GM12878 (cell line): ENCODE measurements at regions of chr3 and their contacts with region 1.

Region 1: GRCh38 chr3:136752422-136753325 is 496 bp upstream of the STAG1 start:
- DNase-seq: peak; percentile 94
- ATAC-seq: peak; percentile 90
- H3K4me3 ChIP-seq: peak overlapping the region; percentile 63
- H3K27ac ChIP-seq: peak overlapping the region; percentile 91
- H3K4me1 ChIP-seq: peaks cover 16% of the 10 kb centered on the region
- H3K27me3 ChIP-seq: no peaks in the 10 kb centered on the region
- CTCF ChIP-seq: peak in 2 of 3 experiments; percentile 71 to 97; a peak in 4 of 6 replicates
- EP300 ChIP-seq: no peak
- POLR2A ChIP-seq: peak; percentile 89
- RAD21 ChIP-seq: peak; percentile 67

Region 2: DNA sequence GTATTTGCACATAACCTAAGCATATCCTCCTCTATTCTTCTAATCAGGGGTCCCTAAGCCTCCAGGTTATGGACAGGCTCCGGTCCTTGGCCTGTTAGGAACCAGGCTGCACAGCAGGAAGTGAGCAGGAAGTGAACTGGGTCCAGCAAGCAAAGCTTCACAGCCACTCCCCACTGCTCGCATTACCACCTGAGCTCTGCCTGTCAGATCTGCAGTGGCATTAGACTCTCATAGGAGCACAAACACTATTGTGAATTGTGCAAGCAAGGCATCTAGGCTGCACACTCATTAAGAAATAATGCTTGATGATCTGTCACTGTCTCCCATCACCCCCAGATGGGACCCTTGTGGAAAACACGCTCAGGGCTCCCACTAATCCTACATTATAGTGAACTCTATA is 566.3 kb before region 1 on chr3:
- CTCF ChIA-PET with region 1: interaction called, 4 read pairs
- POLR2A ChIA-PET with region 1: no interaction called
- RAD21 ChIA-PET with region 1: interaction called, 4 read pairs
- SMC1A ChIA-PET with region 1: no interaction called
- in situ Hi-C with region 1: loop called (anchors 5 kb)
- intact Hi-C with region 1: no loop called
- DNase-seq: no peak
- ATAC-seq: peak; percentile 64
- H3K4me3 ChIP-seq: no peak overlapping the region; the same call in 1 of the 2 replicates
- H3K27ac ChIP-seq: no peak overlapping the region
- H3K4me1 ChIP-seq: peaks cover 10% of the 10 kb centered on the region; the same call in 1 of the 2 replicates
- H3K27me3 ChIP-seq: no peaks in the 10 kb centered on the region
- CTCF ChIP-seq: no peak
- EP300 ChIP-seq: no peak
- POLR2A ChIP-seq: no peak
- RAD21 ChIP-seq: no peak

Region 3: GRCh38 chr3:136350132-136350531 is 402.5 kb before region 1 on chr3:
- CTCF ChIA-PET with region 1: interaction called, 14 read pairs
- POLR2A ChIA-PET with region 1: interaction called, 5 read pairs
- RAD21 ChIA-PET with region 1: interaction called, 5 read pairs
- SMC1A ChIA-PET with region 1: interaction called, 8 read pairs
- in situ Hi-C with region 1: no loop called
- intact Hi-C with region 1: no loop called
- DNase-seq: no peak
- ATAC-seq: no peak
- H3K4me3 ChIP-seq: no peak overlapping the region
- H3K27ac ChIP-seq: no peak overlapping the region
- H3K4me1 ChIP-seq: peaks cover 6% of the 10 kb centered on the region; the same call in 1 of the 2 replicates
- H3K27me3 ChIP-seq: no peaks in the 10 kb centered on the region
- CTCF ChIP-seq: no peak
- EP300 ChIP-seq: no peak
- POLR2A ChIP-seq: no peak
- RAD21 ChIP-seq: no peak

Region 4: GRCh38 chr3:136545664-136546268 is 206.9 kb before region 1 on chr3:
- CTCF ChIA-PET with region 1: interaction called, 47 read pairs
- POLR2A ChIA-PET with region 1: no interaction called
- RAD21 ChIA-PET with region 1: interaction called, 43 read pairs
- SMC1A ChIA-PET with region 1: interaction called, 9 read pairs
- in situ Hi-C with region 1: no loop called
- intact Hi-C with region 1: loop called (anchors 2 kb)
- DNase-seq: no peak
- ATAC-seq: no peak
- H3K4me3 ChIP-seq: no peak overlapping the region
- H3K27ac ChIP-seq: no peak overlapping the region
- H3K4me1 ChIP-seq: no peaks in the 10 kb centered on the region
- H3K27me3 ChIP-seq: no peaks in the 10 kb centered on the region
- CTCF ChIP-seq: peak in 2 of 3 experiments; percentile 11 to 37; a peak in 2 of 6 replicates
- EP300 ChIP-seq: no peak
- POLR2A ChIP-seq: no peak
- RAD21 ChIP-seq: peak; percentile 51

Region 5: DNA sequence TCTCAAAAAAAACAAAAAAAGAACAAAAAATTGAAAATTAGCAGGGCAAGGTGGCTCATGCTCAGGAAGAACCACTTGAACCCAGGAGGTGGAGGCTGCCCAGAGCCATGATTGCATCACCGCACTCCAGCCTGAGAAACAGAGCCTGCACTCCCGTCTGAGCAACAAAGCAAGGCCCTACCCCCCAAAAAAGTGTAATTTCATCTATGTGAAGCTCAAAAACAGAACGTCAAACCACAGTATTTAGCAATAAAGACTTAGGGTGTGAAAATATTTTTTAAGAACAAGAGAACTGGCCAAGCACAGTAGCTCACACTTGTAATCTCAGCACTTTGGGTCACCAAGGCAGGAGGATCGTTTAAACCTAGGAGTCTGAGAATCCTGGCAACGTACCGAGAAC is 38.7 kb before region 1 on chr3:
- CTCF ChIA-PET with region 1: no interaction called
- POLR2A ChIA-PET with region 1: no interaction called
- RAD21 ChIA-PET with region 1: no interaction called
- SMC1A ChIA-PET with region 1: no interaction called
- in situ Hi-C with region 1: no loop called
- intact Hi-C with region 1: no loop called
- DNase-seq: no peak
- ATAC-seq: no peak
- H3K4me3 ChIP-seq: no peak overlapping the region
- H3K27ac ChIP-seq: no peak overlapping the region
- H3K4me1 ChIP-seq: no peaks in the 10 kb centered on the region
- H3K27me3 ChIP-seq: no peaks in the 10 kb centered on the region
- CTCF ChIP-seq: no peak
- EP300 ChIP-seq: no peak
- POLR2A ChIP-seq: no peak
- RAD21 ChIP-seq: no peak

Region 6: DNA sequence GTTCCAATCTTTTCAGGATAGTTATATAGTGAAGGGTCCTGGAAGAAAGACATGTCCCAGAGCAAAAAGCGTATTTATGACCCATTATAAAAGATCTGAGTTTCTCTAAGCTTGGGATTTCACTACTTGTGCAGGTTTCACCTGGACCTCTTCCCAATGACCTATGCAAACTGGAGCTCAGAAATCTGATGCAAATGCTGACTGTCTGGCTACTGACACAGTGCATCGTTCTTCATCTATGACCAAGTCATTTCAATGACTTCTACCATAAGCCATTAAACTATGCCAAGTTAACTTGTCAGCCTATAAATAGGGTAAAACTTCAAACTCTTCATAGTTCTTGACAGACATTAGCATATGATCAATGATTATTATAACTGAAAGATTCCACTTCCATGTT is 11.6 kb before region 1 on chr3:
- CTCF ChIA-PET with region 1: interaction called, 17 read pairs
- POLR2A ChIA-PET with region 1: interaction called, 5 read pairs
- RAD21 ChIA-PET with region 1: interaction called, 10 read pairs
- SMC1A ChIA-PET with region 1: interaction called, 12 read pairs
- in situ Hi-C with region 1: no loop called
- intact Hi-C with region 1: no loop called
- DNase-seq: no peak
- ATAC-seq: no peak; the same call in 2 of the 3 replicates
- H3K4me3 ChIP-seq: no peak overlapping the region
- H3K27ac ChIP-seq: no peak overlapping the region
- H3K4me1 ChIP-seq: no peaks in the 10 kb centered on the region; the same call in 1 of the 2 replicates
- H3K27me3 ChIP-seq: no peaks in the 10 kb centered on the region
- CTCF ChIP-seq: no peak
- EP300 ChIP-seq: no peak
- POLR2A ChIP-seq: no peak
- RAD21 ChIP-seq: no peak

Region 7: GRCh38 chr3:136938334-136938733 is 185.7 kb after region 1 on chr3:
- CTCF ChIA-PET with region 1: interaction called, 11 read pairs
- POLR2A ChIA-PET with region 1: interaction called, 4 read pairs
- RAD21 ChIA-PET with region 1: interaction called, 12 read pairs
- SMC1A ChIA-PET with region 1: interaction called, 7 read pairs
- in situ Hi-C with region 1: no loop called
- intact Hi-C with region 1: no loop called
- DNase-seq: no peak
- ATAC-seq: peak; percentile 21
- H3K4me3 ChIP-seq: no peak overlapping the region
- H3K27ac ChIP-seq: no peak overlapping the region; the same call in 1 of the 2 replicates
- H3K4me1 ChIP-seq: peaks cover 12% of the 10 kb centered on the region
- H3K27me3 ChIP-seq: no peaks in the 10 kb centered on the region
- CTCF ChIP-seq: no peak
- EP300 ChIP-seq: no peak
- POLR2A ChIP-seq: no peak
- RAD21 ChIP-seq: no peak